ENCODE measurements at regions of chr14 and their contacts with region 1.

Region 1: DNA sequence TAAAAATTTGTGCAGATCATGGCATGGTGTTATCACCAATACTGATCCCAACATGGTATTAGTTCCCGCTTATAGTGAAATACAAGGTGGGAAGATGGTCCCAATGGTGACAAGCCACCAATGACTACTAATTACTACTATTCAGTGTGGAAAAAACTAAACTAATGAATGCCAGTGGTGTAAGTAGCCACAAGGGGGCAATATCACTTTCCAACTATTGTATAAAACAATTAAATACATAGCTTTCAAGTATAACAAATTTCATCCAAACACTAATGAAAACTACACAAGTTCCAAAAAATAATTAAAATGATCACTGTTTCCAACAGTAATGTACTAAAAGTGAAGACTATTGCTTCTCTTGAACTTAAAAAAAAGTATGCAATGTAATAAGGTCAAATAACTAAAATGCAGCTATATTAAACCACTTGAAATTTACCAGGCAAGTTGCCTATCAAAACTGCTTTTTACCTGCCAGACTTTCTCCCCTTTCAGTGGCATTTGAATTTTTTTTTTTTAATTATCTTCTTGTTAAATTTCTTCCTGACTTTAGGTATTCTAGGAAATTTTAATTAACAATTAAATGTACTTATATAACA is 58.0 kb downstream of the PAPLN start:
- DNase-seq: peak in 6 of 35 experiments; percentile 5 to 63 (median 12)
- ATAC-seq: peak in 1 of 4 experiments; percentile 30
- H3K4me3 ChIP-seq: no peak overlapping the region
- H3K4me3 Mint-ChIP-seq: no peak overlapping the region
- H3K27ac ChIP-seq: no peak overlapping the region
- H3K27ac Mint-ChIP-seq: no peak overlapping the region
- H3K4me1 ChIP-seq: no peaks in the 10 kb centered on the region
- H3K4me1 Mint-ChIP-seq: peaks cover 0 to 3% (median 2%) of the 10 kb centered on the region in 3 donors
- H3K27me3 ChIP-seq: no peaks in the 10 kb centered on the region
- H3K27me3 Mint-ChIP-seq: no peaks in the 10 kb centered on the region

Region 2: DNA sequence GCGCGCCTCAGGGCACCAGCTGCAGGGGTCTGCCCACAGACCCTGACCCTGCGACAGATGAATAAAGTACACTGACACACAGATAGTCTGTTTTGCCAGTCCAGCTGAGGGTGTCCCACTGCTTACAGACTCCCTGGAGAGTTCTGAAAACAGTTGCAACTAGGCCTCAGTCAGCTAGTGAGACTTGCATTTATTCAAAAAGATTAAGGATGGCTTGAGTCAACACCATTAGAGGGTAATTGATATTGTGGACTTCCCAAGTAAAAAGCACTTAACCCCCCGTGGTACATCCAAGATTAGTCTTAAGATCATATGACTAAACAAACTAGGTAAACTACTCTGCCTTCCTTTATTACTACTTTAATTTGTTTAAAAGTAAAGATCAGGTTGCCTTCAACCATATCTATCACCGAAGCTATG is 170.1 kb before region 1 on chr14:
- CTCF ChIA-PET with region 1: no interaction called
- POLR2A ChIA-PET with region 1: no interaction called
- DNase-seq: no peak
- ATAC-seq: no peak
- H3K4me3 ChIP-seq: no peak overlapping the region
- H3K4me3 Mint-ChIP-seq: no peak overlapping the region
- H3K27ac ChIP-seq: no peak overlapping the region
- H3K27ac Mint-ChIP-seq: peak overlapping the region in 1 of 2 donors; percentile 13
- H3K4me1 ChIP-seq: peaks cover 0 to 2% of the 10 kb centered on the region in 2 experiments
- H3K4me1 Mint-ChIP-seq: peaks cover 0 to 3% (median 2%) of the 10 kb centered on the region in 3 donors
- H3K27me3 ChIP-seq: no peaks in the 10 kb centered on the region
- H3K27me3 Mint-ChIP-seq: no peaks in the 10 kb centered on the region

Region 3: DNA sequence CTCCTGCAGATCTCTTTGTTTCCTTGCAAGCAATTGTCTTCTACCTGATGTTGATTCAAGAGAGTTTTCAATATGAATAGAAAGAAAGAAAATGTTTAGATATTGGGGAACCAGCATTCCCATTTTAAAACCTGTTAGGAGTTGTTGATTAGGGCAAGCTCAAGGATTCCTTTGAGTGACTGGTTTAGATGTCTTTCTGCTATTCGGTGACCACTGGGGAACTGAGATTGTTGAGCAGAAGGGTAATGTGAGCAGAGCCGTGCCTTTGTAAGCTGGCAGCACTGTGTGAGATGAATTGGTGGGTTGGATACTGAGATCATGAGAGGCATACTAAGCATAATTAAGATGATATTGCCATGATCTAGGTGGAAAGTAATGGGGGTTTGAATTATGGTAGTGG is 97.0 kb before region 1 on chr14:
- CTCF ChIA-PET with region 1: interaction called in 1 of 2 experiments, 10 read pairs
- POLR2A ChIA-PET with region 1: no interaction called
- DNase-seq: no peak
- ATAC-seq: no peak
- H3K4me3 ChIP-seq: no peak overlapping the region
- H3K4me3 Mint-ChIP-seq: no peak overlapping the region
- H3K27ac ChIP-seq: no peak overlapping the region
- H3K27ac Mint-ChIP-seq: no peak overlapping the region
- H3K4me1 ChIP-seq: no peaks in the 10 kb centered on the region
- H3K4me1 Mint-ChIP-seq: no peaks in the 10 kb centered on the region
- H3K27me3 ChIP-seq: no peaks in the 10 kb centered on the region
- H3K27me3 Mint-ChIP-seq: no peaks in the 10 kb centered on the region

Region 4: DNA sequence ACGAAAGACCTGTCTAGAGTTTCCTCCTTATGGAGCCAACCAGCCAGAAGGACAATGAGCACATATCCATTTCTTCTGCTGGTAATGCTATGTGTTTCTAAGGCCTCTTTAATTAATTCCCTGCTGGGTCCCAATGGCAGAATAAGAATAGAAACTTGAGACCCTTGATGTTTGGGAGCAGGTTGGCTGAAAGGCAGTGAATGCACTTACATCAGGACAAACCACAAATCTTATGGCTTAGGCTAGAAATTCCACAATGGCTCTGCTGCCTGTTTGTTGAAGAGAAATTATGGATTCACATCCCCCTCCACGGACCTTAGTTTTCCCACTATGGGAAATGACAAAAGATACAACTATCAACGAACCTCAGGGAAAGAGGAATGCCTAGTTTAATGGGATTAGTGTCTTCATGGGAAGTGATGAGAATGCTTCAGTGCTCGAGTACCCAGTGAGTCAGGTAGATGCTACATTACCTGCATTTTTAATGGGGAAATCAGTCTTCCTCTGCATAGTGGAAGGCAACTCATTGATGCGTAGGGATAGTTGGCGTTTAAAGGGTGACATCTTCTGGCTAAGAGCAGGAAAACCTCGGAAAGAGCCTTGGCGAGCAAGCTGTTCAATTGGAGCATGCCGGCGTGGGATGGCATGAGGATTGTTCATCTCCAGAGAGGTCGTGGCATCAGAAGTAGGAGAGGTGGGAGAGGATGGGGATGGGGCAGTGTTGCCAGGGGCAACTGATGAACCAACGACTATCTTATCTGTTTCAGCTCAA is 11.5 kb before region 1 on chr14:
- CTCF ChIA-PET with region 1: interaction called in 1 of 2 experiments, 10 read pairs
- POLR2A ChIA-PET with region 1: no interaction called
- DNase-seq: no peak
- ATAC-seq: no peak
- H3K4me3 ChIP-seq: no peak overlapping the region
- H3K4me3 Mint-ChIP-seq: no peak overlapping the region
- H3K27ac ChIP-seq: no peak overlapping the region
- H3K27ac Mint-ChIP-seq: no peak overlapping the region
- H3K4me1 ChIP-seq: no peaks in the 10 kb centered on the region
- H3K4me1 Mint-ChIP-seq: peaks cover 3 to 8% (median 6%) of the 10 kb centered on the region in 3 donors
- H3K27me3 ChIP-seq: no peaks in the 10 kb centered on the region
- H3K27me3 Mint-ChIP-seq: no peaks in the 10 kb centered on the region

Region 5: GRCh38 chr14:73307261-73307660 is 12.0 kb after region 1 on chr14:
- CTCF ChIA-PET with region 1: interaction called in 1 of 2 experiments, 13 read pairs
- POLR2A ChIA-PET with region 1: no interaction called
- DNase-seq: no peak
- ATAC-seq: no peak
- H3K4me3 ChIP-seq: no peak overlapping the region
- H3K4me3 Mint-ChIP-seq: no peak overlapping the region
- H3K27ac ChIP-seq: no peak overlapping the region
- H3K27ac Mint-ChIP-seq: peak overlapping the region in 1 of 2 donors; percentile 29
- H3K4me1 ChIP-seq: no peaks in the 10 kb centered on the region
- H3K4me1 Mint-ChIP-seq: peaks cover 9 to 25% (median 13%) of the 10 kb centered on the region in 3 donors
- H3K27me3 ChIP-seq: no peaks in the 10 kb centered on the region
- H3K27me3 Mint-ChIP-seq: no peaks in the 10 kb centered on the region

Region 6: GRCh38 chr14:73467377-73467776 is 172.1 kb after region 1 on chr14:
- CTCF ChIA-PET with region 1: interaction called, 13 to 83 read pairs
- POLR2A ChIA-PET with region 1: interaction called in 1 of 2 experiments, 3 read pairs
- DNase-seq: peak in 1 of 35 experiments; percentile 16
- ATAC-seq: no peak
- H3K4me3 ChIP-seq: no peak overlapping the region
- H3K4me3 Mint-ChIP-seq: no peak overlapping the region
- H3K27ac ChIP-seq: no peak overlapping the region
- H3K27ac Mint-ChIP-seq: peak overlapping the region in 1 of 2 donors; percentile 28
- H3K4me1 ChIP-seq: peaks cover 5 to 11% of the 10 kb centered on the region in 2 experiments
- H3K4me1 Mint-ChIP-seq: peaks cover 20 to 39% (median 28%) of the 10 kb centered on the region in 3 donors
- H3K27me3 ChIP-seq: no peaks in the 10 kb centered on the region
- H3K27me3 Mint-ChIP-seq: no peaks in the 10 kb centered on the region

Region 7: DNA sequence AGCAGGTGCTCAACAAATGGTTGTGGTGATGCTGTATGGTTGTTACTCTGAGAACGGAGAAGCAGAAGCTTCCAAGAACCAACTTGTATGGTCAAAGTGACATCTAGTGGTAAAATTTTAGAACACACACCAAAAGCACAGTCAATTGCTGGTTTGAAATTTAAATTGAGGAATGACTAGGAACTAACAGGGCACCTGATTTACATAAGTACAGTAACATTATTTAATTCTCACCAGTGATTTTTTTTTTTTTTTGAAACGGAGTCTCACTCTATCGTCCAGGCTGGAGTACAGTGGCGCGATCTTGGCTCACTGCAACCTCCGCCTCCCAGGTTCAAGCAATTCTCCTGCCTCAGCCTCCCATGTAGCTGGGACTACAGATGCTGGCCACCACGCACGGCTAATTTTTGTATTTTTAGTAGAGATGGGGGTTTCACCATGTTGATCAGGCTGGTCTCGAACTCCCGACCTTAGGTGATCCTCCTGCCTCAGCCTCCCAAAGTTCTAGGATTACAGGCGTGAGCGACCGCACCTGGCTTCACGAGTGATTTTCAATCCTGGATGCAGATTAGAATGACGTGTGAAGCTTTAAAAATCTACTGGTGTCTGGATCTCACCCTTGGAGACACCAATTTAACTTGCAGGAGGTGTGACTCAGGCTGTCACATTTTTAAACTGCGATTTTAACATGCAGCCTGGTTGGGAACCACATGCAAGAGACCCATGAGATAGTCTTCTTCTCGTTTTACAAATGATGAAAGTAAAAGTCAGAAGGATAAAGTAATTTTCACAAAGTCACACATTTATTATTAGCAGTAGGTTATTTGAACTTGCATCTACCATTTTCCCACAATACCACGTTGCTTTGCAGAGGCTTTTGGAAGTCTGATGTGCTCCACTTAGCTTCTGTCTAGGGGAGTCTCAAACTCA is 177.2 kb after region 1 on chr14:
- CTCF ChIA-PET with region 1: interaction called, 13 to 83 read pairs
- POLR2A ChIA-PET with region 1: no interaction called
- DNase-seq: peak in 2 of 35 experiments; percentile 20 to 74
- ATAC-seq: peak; percentile 63 to 82 (median 72)
- H3K4me3 ChIP-seq: no peak overlapping the region
- H3K4me3 Mint-ChIP-seq: no peak overlapping the region
- H3K27ac ChIP-seq: no peak overlapping the region
- H3K27ac Mint-ChIP-seq: no peak overlapping the region
- H3K4me1 ChIP-seq: peaks cover 0 to under 1% of the 10 kb centered on the region in 2 experiments
- H3K4me1 Mint-ChIP-seq: peaks cover 0 to 6% (median 4%) of the 10 kb centered on the region in 3 donors
- H3K27me3 ChIP-seq: no peaks in the 10 kb centered on the region
- H3K27me3 Mint-ChIP-seq: no peaks in the 10 kb centered on the region

Measured in T-cell (primary cell).